A549 (cell line): ENCODE measurements at regions of chr11 and their contacts with region 1.

Region 1: DNA sequence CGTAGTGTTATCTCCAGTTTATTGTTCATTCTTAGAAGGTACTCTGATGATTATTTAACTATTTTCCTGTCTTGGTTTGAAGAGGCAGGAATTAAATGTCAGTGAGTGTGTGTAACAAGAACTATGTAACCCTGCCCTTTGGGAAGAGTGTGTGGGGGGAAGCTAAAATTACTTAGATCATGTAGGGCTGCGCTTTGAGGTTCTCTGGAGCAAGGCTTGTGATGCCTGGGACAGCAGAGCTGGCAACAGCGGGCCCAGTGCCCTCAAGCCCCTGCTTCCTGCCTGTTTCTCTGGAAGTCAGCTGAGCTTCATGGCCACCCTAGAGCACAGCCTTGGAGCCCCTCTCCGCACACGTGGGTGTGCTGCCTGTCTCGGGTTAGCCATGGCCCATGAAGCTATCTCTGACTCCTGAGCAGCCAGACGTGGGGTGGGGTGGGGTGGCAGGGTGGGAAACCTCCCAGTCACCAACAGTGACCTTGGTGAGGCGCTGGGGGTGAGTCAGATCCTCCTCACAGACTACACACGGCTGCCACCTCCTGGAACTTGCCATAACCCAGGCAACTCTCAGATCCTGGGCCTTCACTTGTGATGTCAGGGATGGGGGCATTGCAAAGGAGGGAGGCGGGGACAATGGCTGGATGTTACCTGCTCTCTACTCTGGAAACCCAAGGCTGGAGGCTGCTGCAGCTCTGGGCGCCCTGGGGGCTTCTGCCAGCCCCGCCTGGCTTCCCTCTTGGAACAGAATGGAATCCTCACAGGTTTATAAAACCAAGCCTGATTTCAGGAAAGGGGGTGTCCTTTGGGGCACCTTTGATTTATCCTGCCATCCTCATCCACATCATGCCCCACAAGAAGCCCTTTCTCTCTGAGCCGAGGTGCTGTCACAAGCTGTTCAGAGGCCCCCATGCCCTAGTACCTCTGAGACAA is 88.6 kb downstream of the SNX19 start:
- DNase-seq: peak; percentile 69 to 80
- ATAC-seq: peak; percentile 98 to 99
- H3K4me3 ChIP-seq: no peak overlapping the region
- H3K27ac ChIP-seq: peak overlapping the region; percentile 74 to 91
- H3K4me1 ChIP-seq: peaks cover 13% of the 10 kb centered on the region
- CTCF ChIP-seq: peak; percentile 62
- EP300 ChIP-seq: no peak
- POLR2A ChIP-seq: no peak
- RAD21 ChIP-seq: peak; percentile 89 to 93

Region 2: GRCh38 chr11:130814440-130815096 is 13.1 kb before region 1 on chr11:
- CTCF ChIA-PET with region 1: interaction called, 11 read pairs
- POLR2A ChIA-PET with region 1: no interaction called
- DNase-seq: no peak
- ATAC-seq: no peak
- H3K4me3 ChIP-seq: no peak overlapping the region
- H3K27ac ChIP-seq: no peak overlapping the region
- H3K4me1 ChIP-seq: peaks cover 16% of the 10 kb centered on the region
- CTCF ChIP-seq: no peak
- EP300 ChIP-seq: no peak
- POLR2A ChIP-seq: no peak
- RAD21 ChIP-seq: no peak

Region 3: DNA sequence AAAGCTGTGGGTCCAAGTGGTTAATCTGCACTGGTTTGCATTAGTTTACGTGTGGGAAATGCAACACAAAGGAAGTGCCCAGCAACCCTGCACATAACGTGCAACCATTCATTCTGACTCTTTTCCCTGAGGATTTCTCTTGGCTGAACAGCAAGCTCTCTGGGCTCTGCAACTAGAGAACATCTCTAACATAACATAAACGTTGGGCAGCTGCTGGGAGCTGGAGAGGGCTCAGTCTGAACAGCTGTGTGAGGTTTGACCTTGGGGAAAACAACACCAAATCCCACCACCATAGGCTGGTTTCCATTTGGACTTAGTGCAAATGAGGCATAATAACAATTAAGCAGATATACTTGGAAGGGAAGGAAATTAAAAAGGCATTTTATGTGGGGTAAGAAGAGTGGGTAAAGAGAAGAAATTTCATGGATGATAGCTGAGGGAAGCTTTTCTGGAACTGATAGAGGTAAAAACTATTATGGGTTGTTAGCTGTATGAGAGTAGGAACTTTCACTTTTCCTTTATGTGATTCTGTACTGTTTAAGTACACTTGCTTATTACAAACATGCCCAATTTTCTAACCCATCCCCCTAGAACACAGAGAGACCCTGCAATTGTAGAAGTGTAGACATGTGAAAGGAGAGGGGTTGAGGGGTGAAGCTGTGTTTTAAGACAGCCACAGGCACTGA is 12.4 kb after region 1 on chr11:
- CTCF ChIA-PET with region 1: interaction called, 34 read pairs
- POLR2A ChIA-PET with region 1: no interaction called
- DNase-seq: no peak
- ATAC-seq: no peak
- H3K4me3 ChIP-seq: no peak overlapping the region
- H3K27ac ChIP-seq: no peak overlapping the region
- H3K4me1 ChIP-seq: no peaks in the 10 kb centered on the region
- CTCF ChIP-seq: no peak
- EP300 ChIP-seq: no peak
- POLR2A ChIP-seq: no peak
- RAD21 ChIP-seq: no peak